Activated CD4-positive, alpha-beta T cell treated with anti-CD3 and anti-CD28 coated beads for 36 hours (primary cell): ENCODE measurements at regions of chr14 and their contacts with region 1.

Region 1: GRCh38 chr14:21455911-21456667 is at the start of gene CHD8:
- DNase-seq: peak; percentile 100
- ATAC-seq: peak; percentile 99
- H3K4me3 Mint-ChIP-seq: peak within 1 kb of the TSS; percentile 97
- H3K27ac Mint-ChIP-seq: peak within 1 kb of the TSS; percentile 99
- H3K4me1 Mint-ChIP-seq: peaks cover 30% of the 10 kb centered on the region
- H3K27me3 Mint-ChIP-seq: no peaks in the 10 kb centered on the region
- total RNA-seq, gene CHD8: 84.3 to 104 TPM

Region 2: GRCh38 chr14:21275261-21275858 is 180.7 kb before region 1 on chr14:
- CTCF ChIA-PET with region 1: no interaction called
- POLR2A ChIA-PET with region 1: no interaction called
- intact Hi-C with region 1: no loop called
- DNase-seq: no peak
- ATAC-seq: no peak
- H3K4me3 Mint-ChIP-seq: no peak overlapping the region
- H3K27ac Mint-ChIP-seq: peak overlapping the region; percentile 62
- H3K4me1 Mint-ChIP-seq: peaks cover 5% of the 10 kb centered on the region
- H3K27me3 Mint-ChIP-seq: no peaks in the 10 kb centered on the region

Region 3: DNA sequence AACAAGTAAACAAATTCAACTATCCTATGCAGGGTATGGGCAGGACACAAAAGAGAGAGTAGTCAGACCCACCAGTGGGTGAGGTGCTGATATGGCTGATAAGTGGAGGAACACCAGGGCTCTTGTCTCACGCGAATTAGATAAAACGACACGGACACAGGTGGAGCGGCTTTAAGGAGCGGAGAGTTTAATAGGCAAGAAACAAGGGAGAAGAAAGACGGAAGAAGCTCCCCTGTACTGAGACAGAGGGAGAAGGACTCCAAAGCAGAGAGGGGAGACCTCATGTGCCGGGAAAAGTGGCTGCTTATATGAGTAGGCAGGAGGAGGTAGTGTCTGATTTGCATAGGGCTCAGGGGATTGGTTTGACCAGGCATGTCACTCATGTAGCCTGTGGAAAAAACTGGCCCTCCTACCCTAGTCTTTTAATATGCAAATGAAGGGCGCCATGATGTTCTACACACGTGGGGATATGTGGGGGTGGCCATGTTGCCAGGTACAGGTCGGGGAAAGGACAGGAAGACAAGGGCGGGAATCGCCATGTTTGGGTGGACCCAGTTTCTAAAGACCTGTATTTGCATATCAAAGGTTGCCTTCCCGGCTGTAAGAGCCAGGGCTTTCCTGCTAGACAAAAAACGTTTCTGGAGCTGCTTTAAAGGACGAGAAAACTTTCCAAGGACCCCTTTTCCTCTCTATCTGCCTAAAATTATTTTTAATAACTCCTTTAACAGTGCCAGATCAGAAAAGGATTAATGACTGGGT is 147.4 kb before region 1 on chr14:
- CTCF ChIA-PET with region 1: no interaction called
- POLR2A ChIA-PET with region 1: no interaction called
- intact Hi-C with region 1: loop called in 1 of 2 experiments (anchors 1 kb)
- DNase-seq: peak; percentile 88
- ATAC-seq: peak; percentile 93
- H3K4me3 Mint-ChIP-seq: peak overlapping the region; percentile 73
- H3K27ac Mint-ChIP-seq: peak overlapping the region; percentile 92
- H3K4me1 Mint-ChIP-seq: peaks cover 22% of the 10 kb centered on the region
- H3K27me3 Mint-ChIP-seq: no peaks in the 10 kb centered on the region

Region 4: GRCh38 chr14:21437063-21437901 is 18.8 kb before region 1 on chr14:
- CTCF ChIA-PET with region 1: interaction called, 40 read pairs
- POLR2A ChIA-PET with region 1: interaction called, 33 read pairs
- intact Hi-C with region 1: loop called (anchors 1 kb)
- DNase-seq: peak; percentile 99
- ATAC-seq: peak; percentile 99
- H3K4me3 Mint-ChIP-seq: peak overlapping the region; percentile 95
- H3K27ac Mint-ChIP-seq: peak overlapping the region; percentile 87
- H3K4me1 Mint-ChIP-seq: peaks cover 57% of the 10 kb centered on the region
- H3K27me3 Mint-ChIP-seq: no peaks in the 10 kb centered on the region

Region 5: GRCh38 chr14:21476925-21477681 is 21.0 kb after region 1 on chr14 and contains the starts of genes RAB2B and TOX4:
- CTCF ChIA-PET with region 1: interaction called, 35 read pairs
- POLR2A ChIA-PET with region 1: interaction called, 5 read pairs
- intact Hi-C with region 1: loop called (anchors 1 kb)
- DNase-seq: peak; percentile 96
- ATAC-seq: peak; percentile 98
- H3K4me3 Mint-ChIP-seq: peak within 1 kb of the TSS; percentile 99
- H3K27ac Mint-ChIP-seq: peak within 1 kb of the TSS; percentile 100
- H3K4me1 Mint-ChIP-seq: peaks cover 22% of the 10 kb centered on the region
- H3K27me3 Mint-ChIP-seq: no peaks in the 10 kb centered on the region
- total RNA-seq, gene RAB2B: 21.2 to 22.0 TPM
- total RNA-seq, gene TOX4: 79.5 to 85.6 TPM

Region 6: GRCh38 chr14:21510735-21511657 is 54.9 kb after region 1 on chr14 and contains the start of gene METTL3:
- CTCF ChIA-PET with region 1: interaction called, 4 read pairs
- POLR2A ChIA-PET with region 1: interaction called, 7 read pairs
- intact Hi-C with region 1: loop called (anchors 1 kb)
- DNase-seq: peak; percentile 96
- ATAC-seq: peak; percentile 99
- H3K4me3 Mint-ChIP-seq: peak within 1 kb of the TSS; percentile 97
- H3K27ac Mint-ChIP-seq: peak within 1 kb of the TSS; percentile 96
- H3K4me1 Mint-ChIP-seq: peaks cover 42% of the 10 kb centered on the region
- H3K27me3 Mint-ChIP-seq: no peaks in the 10 kb centered on the region
- total RNA-seq, gene METTL3: 64.0 to 67.4 TPM

Region 7: GRCh38 chr14:21557084-21557901 is 101.2 kb after region 1 on chr14:
- CTCF ChIA-PET with region 1: no interaction called
- POLR2A ChIA-PET with region 1: no interaction called
- intact Hi-C with region 1: loop called (anchors 1 kb)
- DNase-seq: peak; percentile 87
- ATAC-seq: peak; percentile 68
- H3K4me3 Mint-ChIP-seq: no peak overlapping the region
- H3K27ac Mint-ChIP-seq: no peak overlapping the region
- H3K4me1 Mint-ChIP-seq: peaks cover 4% of the 10 kb centered on the region
- H3K27me3 Mint-ChIP-seq: no peaks in the 10 kb centered on the region

Region 8: DNA sequence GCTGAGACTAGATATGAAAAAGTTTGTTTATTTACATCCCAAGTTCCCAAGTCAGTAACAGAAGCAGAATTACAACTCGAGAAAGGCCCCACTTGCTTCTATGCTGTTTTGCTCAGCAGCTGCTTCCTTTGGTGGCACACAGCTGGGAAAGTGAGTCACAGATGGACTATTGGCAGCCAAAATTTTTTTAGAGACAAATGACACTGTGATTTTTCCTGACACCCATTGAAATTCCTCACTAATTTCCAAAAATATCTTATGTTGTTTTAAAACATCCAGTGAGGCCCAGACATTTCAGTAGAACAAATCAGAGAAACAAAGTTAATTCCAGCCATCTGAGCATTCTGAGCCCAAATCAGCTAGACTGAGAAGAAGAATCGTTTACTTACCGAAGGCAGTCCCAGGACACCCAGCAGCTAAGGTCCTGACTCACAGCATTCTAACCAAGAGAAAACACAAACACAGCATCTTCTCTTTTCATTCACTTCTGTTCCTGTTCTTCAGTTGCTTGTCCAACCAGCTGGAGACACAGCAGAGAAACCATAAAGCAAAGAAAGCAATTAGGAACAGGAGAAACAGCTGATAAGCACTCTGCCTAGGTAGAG is 944.7 kb after region 1 on chr14:
- CTCF ChIA-PET with region 1: no interaction called
- POLR2A ChIA-PET with region 1: no interaction called
- intact Hi-C with region 1: no loop called
- DNase-seq: no peak
- ATAC-seq: no peak
- H3K4me3 Mint-ChIP-seq: no peak overlapping the region
- H3K27ac Mint-ChIP-seq: no peak overlapping the region
- H3K4me1 Mint-ChIP-seq: no peaks in the 10 kb centered on the region
- H3K27me3 Mint-ChIP-seq: no peaks in the 10 kb centered on the region